CD4-positive, alpha-beta T cell (primary cell): ENCODE measurements at regions of chr17 and their contacts with region 1.

Region 1: GRCh38 chr17:35747540-35748017 is 5.5 kb downstream of the GAS2L2 start:
- DNase-seq: peak; percentile 68 to 89 (median 76)
- ATAC-seq: peak; percentile 99
- H3K4me3 ChIP-seq: no peak overlapping the region
- H3K4me3 Mint-ChIP-seq: no peak overlapping the region
- H3K27ac ChIP-seq: no peak overlapping the region
- H3K27ac Mint-ChIP-seq: no peak overlapping the region
- H3K4me1 ChIP-seq: peaks cover 16% of the 10 kb centered on the region
- H3K4me1 Mint-ChIP-seq: peaks cover 4% of the 10 kb centered on the region
- H3K27me3 ChIP-seq: peaks cover 38 to 50% of the 10 kb centered on the region in 2 experiments
- H3K27me3 Mint-ChIP-seq: peaks cover 64% of the 10 kb centered on the region
- CTCF ChIP-seq: peak; percentile 80

Region 2: DNA sequence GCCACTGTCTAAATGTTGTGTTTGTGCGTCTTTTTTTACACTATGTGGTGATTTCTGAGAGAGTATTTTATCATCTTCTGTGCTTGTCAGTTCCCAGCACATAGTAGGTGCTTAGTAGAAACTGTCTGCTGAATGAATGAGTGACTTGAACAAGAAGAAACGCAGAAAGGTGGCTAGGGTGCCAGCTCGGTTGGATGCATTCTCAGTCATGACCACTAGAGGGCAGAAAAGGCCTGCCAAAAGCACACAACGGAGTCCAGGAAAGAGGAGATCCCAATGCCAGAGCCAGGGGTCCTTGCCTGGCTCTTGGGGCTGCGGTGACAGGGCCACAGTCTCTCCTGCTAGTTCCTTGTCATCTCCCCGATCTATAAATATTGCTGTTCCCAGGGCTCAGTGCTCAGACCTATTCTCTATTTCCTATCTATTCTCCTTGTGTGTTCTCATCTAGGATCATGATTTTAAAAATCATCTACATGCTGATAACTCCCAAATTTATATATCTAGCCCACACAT is 1327.3 kb before region 1 on chr17:
- CTCF ChIA-PET with region 1: interaction called, 5 read pairs
- POLR2A ChIA-PET with region 1: no interaction called
- intact Hi-C with region 1: loop called in 1 of 2 experiments (anchors 1 kb)
- DNase-seq: peak; percentile 46 to 77 (median 52)
- ATAC-seq: peak; percentile 51
- H3K4me3 ChIP-seq: no peak overlapping the region
- H3K4me3 Mint-ChIP-seq: no peak overlapping the region
- H3K27ac ChIP-seq: no peak overlapping the region
- H3K27ac Mint-ChIP-seq: no peak overlapping the region
- H3K4me1 ChIP-seq: peaks cover 7% of the 10 kb centered on the region
- H3K4me1 Mint-ChIP-seq: no peaks in the 10 kb centered on the region
- H3K27me3 ChIP-seq: peaks cover 18 to 27% of the 10 kb centered on the region in 2 experiments
- H3K27me3 Mint-ChIP-seq: peaks cover 46% of the 10 kb centered on the region
- CTCF ChIP-seq: peak; percentile 98

Region 3: DNA sequence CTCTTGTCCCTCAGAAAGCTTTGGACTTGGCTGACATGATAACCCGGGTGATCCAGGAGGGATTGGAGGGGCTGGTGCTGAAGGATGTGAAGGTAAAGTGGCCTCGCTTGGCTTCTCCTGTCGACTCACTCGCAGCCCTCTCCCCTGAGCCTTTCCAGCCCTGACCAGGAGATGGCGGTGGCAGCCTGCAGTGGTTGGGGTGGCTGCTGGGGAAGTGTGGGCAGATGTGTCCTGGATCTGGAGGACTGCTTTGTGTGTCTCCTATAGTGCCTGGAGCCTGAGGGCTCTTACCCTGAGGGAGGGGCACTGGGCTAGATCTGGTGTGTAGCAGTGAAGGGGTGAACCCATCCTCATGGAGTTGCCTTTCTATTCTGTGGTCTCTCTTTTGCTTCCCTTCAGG is 749.4 kb before region 1 on chr17:
- CTCF ChIA-PET with region 1: no interaction called
- POLR2A ChIA-PET with region 1: no interaction called
- intact Hi-C with region 1: loop called in 1 of 2 experiments (anchors 5 kb)
- DNase-seq: peak; percentile 69 to 88 (median 76)
- ATAC-seq: peak; percentile 98
- H3K4me3 ChIP-seq: no peak overlapping the region
- H3K4me3 Mint-ChIP-seq: no peak overlapping the region
- H3K27ac ChIP-seq: no peak overlapping the region
- H3K27ac Mint-ChIP-seq: peak overlapping the region; percentile 72
- H3K4me1 ChIP-seq: peaks cover 8% of the 10 kb centered on the region
- H3K4me1 Mint-ChIP-seq: peaks cover 6% of the 10 kb centered on the region
- H3K27me3 ChIP-seq: no peaks in the 10 kb centered on the region
- H3K27me3 Mint-ChIP-seq: no peaks in the 10 kb centered on the region
- CTCF ChIP-seq: peak; percentile 83

Region 4: DNA sequence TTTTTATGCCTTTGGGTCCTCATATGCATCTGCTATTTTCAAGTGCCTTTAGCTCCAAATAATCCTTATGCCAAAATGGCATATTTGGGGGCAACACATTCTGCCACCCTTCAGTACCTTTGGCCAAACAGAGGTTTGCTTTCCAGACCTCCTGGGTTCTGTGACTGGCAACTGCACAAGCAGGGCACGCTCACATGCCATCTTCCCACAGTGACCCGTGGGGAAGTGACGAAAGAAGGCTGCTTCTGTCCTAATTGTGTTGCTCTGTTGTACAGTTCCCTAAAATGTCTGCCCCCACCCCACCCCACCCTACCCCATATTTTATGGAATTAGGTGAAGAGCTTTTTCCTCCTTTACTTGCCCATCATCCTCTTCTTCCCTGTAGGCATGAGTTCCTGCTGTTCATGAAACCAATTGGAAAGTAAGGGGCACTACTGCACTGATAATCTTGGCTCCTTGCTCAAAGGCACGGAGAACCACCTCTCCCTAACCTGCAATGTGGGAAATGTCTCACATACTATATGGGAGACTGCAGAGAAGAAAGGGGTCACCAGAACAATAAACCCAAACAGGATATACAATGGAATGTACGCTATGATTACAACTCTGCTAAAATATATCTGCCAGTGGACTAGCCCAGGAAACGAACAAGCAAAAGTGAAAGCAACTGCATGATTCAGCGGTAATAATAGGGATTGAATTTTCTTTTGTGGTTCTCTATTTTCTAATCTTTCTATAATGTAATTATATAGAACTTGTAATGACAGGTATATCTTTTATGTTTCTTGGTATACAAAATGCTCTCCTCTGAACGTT is 206.8 kb before region 1 on chr17:
- CTCF ChIA-PET with region 1: interaction called, 4 read pairs
- POLR2A ChIA-PET with region 1: no interaction called
- intact Hi-C with region 1: loop called (anchors 5 kb)
- DNase-seq: peak in 7 of 14 experiments; percentile 21 to 83 (median 59)
- ATAC-seq: peak; percentile 47
- H3K4me3 ChIP-seq: peak overlapping the region; percentile 56
- H3K4me3 Mint-ChIP-seq: peak overlapping the region; percentile 93
- H3K27ac ChIP-seq: peak overlapping the region; percentile 67 to 85
- H3K27ac Mint-ChIP-seq: peak overlapping the region; percentile 82
- H3K4me1 ChIP-seq: peaks cover 23% of the 10 kb centered on the region
- H3K4me1 Mint-ChIP-seq: peaks cover 60% of the 10 kb centered on the region
- H3K27me3 ChIP-seq: no peaks in the 10 kb centered on the region
- H3K27me3 Mint-ChIP-seq: no peaks in the 10 kb centered on the region
- CTCF ChIP-seq: no peak

Region 5: DNA sequence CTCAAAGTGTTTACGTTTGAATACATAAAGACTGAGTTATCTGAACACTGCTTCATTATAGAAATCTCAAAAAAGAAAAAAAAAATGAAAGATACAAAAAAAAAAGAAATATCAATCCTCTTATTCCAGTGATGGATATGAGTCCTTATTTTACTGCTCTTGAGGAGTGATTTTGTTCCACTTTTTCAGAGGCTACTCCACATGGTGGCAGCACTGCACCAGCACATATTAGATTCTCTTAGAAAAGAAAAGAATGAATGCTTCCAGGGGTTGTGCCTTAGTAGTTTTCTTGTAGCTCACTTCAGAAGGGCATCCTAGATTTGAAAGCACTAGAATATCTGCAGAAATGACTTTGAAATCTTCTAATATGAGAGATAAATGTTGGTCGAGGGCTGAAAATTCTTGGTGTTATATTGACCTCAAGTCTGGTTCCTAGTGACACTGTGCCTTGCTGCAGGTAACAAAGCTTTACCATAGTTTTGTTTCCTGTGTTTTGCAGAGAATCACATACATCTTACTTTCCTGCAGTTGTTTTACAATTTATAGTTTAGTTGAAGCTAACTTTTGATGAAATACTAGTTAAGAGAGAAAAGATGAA is 134.6 kb before region 1 on chr17:
- CTCF ChIA-PET with region 1: interaction called, 19 read pairs
- POLR2A ChIA-PET with region 1: interaction called, 9 read pairs
- intact Hi-C with region 1: loop called (anchors 1 kb)
- DNase-seq: peak in 12 of 14 experiments; percentile 10 to 58 (median 30)
- ATAC-seq: no peak
- H3K4me3 ChIP-seq: no peak overlapping the region
- H3K4me3 Mint-ChIP-seq: no peak overlapping the region
- H3K27ac ChIP-seq: no peak overlapping the region
- H3K27ac Mint-ChIP-seq: no peak overlapping the region
- H3K4me1 ChIP-seq: no peaks in the 10 kb centered on the region
- H3K4me1 Mint-ChIP-seq: peaks cover 7% of the 10 kb centered on the region
- H3K27me3 ChIP-seq: no peaks in the 10 kb centered on the region
- H3K27me3 Mint-ChIP-seq: no peaks in the 10 kb centered on the region
- CTCF ChIP-seq: peak; percentile 68

Region 6: GRCh38 chr17:35713069-35713728 is 34.4 kb before region 1 on chr17:
- CTCF ChIA-PET with region 1: no interaction called
- POLR2A ChIA-PET with region 1: no interaction called
- intact Hi-C with region 1: no loop called
- DNase-seq: peak in 1 of 14 experiments; percentile 53
- ATAC-seq: no peak
- H3K4me3 ChIP-seq: no peak overlapping the region
- H3K4me3 Mint-ChIP-seq: no peak overlapping the region
- H3K27ac ChIP-seq: no peak overlapping the region
- H3K27ac Mint-ChIP-seq: no peak overlapping the region
- H3K4me1 ChIP-seq: peaks cover 18% of the 10 kb centered on the region
- H3K4me1 Mint-ChIP-seq: peaks cover 29% of the 10 kb centered on the region
- H3K27me3 ChIP-seq: no peaks in the 10 kb centered on the region
- H3K27me3 Mint-ChIP-seq: no peaks in the 10 kb centered on the region
- CTCF ChIP-seq: no peak

Region 7: DNA sequence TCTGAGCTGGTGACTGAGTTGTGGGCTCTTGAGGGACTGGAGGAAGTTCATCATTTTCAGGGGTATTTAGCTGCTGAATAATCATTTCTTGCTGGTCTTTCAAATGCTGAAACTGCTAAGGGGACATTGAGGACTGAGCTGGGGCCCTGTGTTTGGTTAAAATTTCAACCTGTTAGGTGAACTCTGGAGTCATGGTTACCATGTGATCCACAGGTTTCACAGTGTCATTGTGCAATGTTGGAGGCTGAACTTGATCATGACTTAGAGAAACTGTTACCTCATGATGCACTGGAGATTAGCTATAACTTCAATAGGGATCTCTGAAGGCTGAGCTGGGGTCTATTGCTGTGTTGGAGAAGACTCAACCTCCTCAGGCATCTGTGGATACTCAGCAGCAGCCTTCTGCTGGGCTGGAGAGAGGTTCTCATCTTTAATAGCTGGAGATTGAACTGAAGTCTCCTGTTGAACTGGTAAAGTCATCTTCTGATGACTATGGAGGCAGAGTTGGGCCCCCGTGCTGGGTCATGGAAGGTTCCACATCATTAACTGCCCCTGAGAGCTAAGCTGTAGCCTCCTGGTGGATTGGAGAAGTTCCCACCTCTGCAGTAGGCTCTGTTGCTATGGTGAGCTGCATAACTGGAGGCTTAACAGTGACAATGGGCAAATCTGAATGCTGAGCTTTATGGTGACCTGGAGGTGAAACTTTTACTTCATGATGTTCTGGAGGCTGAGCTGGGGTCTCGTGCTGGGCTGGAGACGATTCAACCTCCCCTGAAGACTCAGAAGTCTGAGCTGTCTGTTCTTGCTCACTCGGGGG is 167.8 kb after region 1 on chr17:
- CTCF ChIA-PET with region 1: no interaction called
- POLR2A ChIA-PET with region 1: no interaction called
- intact Hi-C with region 1: no loop called
- DNase-seq: no peak
- ATAC-seq: no peak
- H3K4me3 ChIP-seq: no peak overlapping the region
- H3K4me3 Mint-ChIP-seq: no peak overlapping the region
- H3K27ac ChIP-seq: no peak overlapping the region
- H3K27ac Mint-ChIP-seq: no peak overlapping the region
- H3K4me1 ChIP-seq: peaks cover 19% of the 10 kb centered on the region
- H3K4me1 Mint-ChIP-seq: peaks cover 7% of the 10 kb centered on the region
- H3K27me3 ChIP-seq: no peaks in the 10 kb centered on the region
- H3K27me3 Mint-ChIP-seq: no peaks in the 10 kb centered on the region
- CTCF ChIP-seq: no peak

Region 8: DNA sequence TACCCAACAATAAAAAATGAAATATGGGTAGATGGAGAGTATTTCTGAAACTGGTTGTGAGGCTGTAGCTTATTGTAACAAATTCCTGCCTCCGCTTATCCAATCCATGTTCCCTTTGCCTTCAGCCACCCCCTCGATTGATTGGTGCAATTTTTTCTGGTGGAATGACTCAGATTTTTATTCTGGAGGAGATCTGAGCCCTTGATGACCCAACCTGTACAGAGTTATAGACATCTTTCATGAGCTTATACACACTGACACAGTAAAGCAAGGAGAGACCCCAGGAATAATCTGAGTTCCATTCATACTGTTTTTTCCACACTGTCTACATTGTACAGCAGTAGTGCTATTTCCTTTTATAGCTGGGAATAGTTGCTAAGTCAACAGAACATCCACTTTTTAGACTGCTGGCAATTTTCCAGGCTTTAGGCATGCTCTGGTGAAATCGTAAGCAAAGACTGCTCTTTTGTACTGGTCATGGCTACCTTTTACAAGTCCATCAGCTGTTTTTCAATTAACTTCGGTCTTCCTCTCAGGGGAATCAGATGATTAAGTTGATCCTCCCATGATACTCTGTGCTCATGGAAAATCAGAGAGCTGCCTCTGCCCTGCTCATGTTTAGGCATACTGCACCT is 386.1 kb after region 1 on chr17:
- CTCF ChIA-PET with region 1: no interaction called
- POLR2A ChIA-PET with region 1: no interaction called
- intact Hi-C with region 1: no loop called
- DNase-seq: no peak
- ATAC-seq: no peak
- H3K4me3 ChIP-seq: no peak overlapping the region
- H3K4me3 Mint-ChIP-seq: no peak overlapping the region
- H3K27ac ChIP-seq: no peak overlapping the region
- H3K27ac Mint-ChIP-seq: no peak overlapping the region
- H3K4me1 ChIP-seq: no peaks in the 10 kb centered on the region
- H3K4me1 Mint-ChIP-seq: no peaks in the 10 kb centered on the region
- H3K27me3 ChIP-seq: peaks cover 0 to 5% of the 10 kb centered on the region in 2 experiments
- H3K27me3 Mint-ChIP-seq: peaks cover 10% of the 10 kb centered on the region
- CTCF ChIP-seq: no peak